Pancreas (tissue), 10 donors: ENCODE measurements at regions of chr1 and their contacts with region 1.

Region 1: GRCh38 chr1:180116964-180117763 is 37.5 kb upstream of the QSOX1 start:
- DNase-seq: no peak
- ATAC-seq: peak in 2 of 4 donors; percentile 30 to 35
- H3K4me3 ChIP-seq: no peak overlapping the region
- H3K27ac ChIP-seq: no peak overlapping the region
- H3K4me1 ChIP-seq: no peaks in the 10 kb centered on the region
- H3K27me3 ChIP-seq: no peaks in the 10 kb centered on the region
- CTCF ChIP-seq: no peak

Region 2: GRCh38 chr1:180062452-180062975 is 54.6 kb before region 1 on chr1:
- intact Hi-C with region 1: no loop called
- DNase-seq: no peak
- ATAC-seq: no peak
- H3K4me3 ChIP-seq: no peak overlapping the region
- H3K27ac ChIP-seq: no peak overlapping the region
- H3K4me1 ChIP-seq: no peaks in the 10 kb centered on the region
- H3K27me3 ChIP-seq: no peaks in the 10 kb centered on the region
- CTCF ChIP-seq: no peak

Region 3: DNA sequence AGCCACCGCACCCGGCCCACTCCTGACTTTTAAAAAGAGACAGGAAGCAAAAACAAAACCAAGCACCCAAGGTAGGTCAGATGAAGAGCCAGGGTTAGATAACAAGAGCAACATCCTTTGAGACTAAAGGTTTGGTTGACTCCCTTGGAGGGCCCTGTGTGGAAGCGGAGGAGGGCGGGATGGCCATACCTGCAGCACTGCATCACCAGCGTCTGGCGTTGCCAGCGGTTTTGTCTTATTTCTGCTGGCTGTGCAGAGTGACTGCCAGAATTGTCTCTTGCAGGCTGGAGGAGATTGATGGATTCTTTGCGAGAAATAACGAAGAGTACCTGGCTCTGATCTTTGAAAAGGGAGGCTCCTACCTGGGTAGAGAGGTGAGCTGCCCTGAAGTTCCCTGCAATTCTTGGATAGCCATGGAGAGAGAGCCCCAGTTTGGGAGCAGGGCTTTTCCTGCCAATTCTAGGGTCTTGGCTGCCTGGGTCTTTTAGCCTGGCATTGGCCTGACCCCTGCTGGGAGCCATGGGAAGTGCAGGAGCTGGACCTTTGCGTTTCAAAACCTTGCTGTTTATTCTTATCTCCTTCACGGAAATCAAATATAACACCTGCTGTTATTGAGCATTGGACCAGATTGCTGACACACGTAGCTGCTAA is 61.5 kb after region 1 on chr1:
- intact Hi-C with region 1: loop called in 1 of 3 experiments (anchors 10 kb)
- DNase-seq: peak; percentile 51 to 90 (median 76)
- ATAC-seq: peak; percentile 67 to 87 (median 84)
- H3K4me3 ChIP-seq: no peak overlapping the region
- H3K27ac ChIP-seq: no peak overlapping the region
- H3K4me1 ChIP-seq: peaks cover 8 to 10% (median 8%) of the 10 kb centered on the region in 3 donors
- H3K27me3 ChIP-seq: no peaks in the 10 kb centered on the region
- CTCF ChIP-seq: peak; percentile 84 to 95 (median 90)